OCI-LY7 (cell line): ENCODE measurements at regions of chr4 and their contacts with region 1.

Region 1: GRCh38 chr4:82968972-82969371 is 41.7 kb downstream of the LIN54 start:
- DNase-seq: peak; percentile 70
- H3K4me3 ChIP-seq: peak overlapping the region; percentile 51
- H3K27ac ChIP-seq: peak overlapping the region; percentile 98
- H3K4me1 ChIP-seq: peaks cover 72% of the 10 kb centered on the region
- CTCF ChIP-seq: no peak

Region 2: GRCh38 chr4:82851885-82852750 is 116.9 kb before region 1 on chr4:
- CTCF ChIA-PET with region 1: no interaction called
- POLR2A ChIA-PET with region 1: interaction called, 12 read pairs
- intact Hi-C with region 1: no loop called
- DNase-seq: peak; percentile 54
- H3K4me3 ChIP-seq: no peak overlapping the region
- H3K27ac ChIP-seq: no peak overlapping the region
- H3K4me1 ChIP-seq: no peaks in the 10 kb centered on the region
- CTCF ChIP-seq: peak; percentile 73

Region 3: DNA sequence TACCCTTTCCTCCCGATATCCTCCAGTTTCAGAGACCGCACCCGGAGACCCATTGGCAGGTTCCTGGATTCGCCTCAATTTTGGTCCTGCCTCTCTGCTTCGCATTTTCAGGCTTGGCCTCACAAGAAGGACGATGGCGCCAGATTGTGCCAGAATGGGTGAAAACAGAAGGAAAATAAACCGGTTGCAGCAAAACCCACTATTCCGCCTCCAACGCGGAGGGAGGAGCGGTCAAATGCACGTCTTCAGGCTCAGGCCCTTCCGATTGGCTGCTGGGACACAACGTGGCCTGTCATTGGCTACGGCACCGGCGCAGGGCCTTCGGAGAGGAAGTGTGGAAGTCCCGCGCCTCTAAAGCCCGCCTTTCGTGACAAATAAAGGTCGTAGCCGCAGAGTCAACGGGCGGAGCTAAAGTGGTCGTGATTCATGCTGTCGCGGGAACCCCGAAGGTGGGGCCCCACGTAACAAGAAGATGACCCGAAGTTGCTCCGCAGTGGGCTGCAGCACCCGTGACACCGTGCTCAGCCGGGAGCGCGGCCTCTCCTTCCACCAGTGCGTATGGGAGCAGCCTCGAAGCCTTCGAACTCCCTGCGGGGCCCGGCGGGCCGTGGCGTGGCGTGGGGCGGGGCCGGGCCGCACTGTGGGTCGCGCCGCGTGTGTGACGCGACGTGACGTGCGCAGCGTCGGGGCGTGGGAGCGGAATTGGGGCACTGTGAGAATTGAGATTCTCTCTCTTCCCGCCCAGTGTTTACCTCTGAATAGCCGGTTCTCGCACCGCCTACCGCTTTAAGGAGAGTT is 68.4 kb before region 1 on chr4 and contains the start of gene THAP9:
- CTCF ChIA-PET with region 1: no interaction called
- POLR2A ChIA-PET with region 1: interaction called, 12 read pairs
- intact Hi-C with region 1: loop called (anchors 2 kb)
- DNase-seq: peak; percentile 99
- H3K4me3 ChIP-seq: peak within 1 kb of the TSS; percentile 85
- H3K27ac ChIP-seq: peak within 1 kb of the TSS; percentile 87
- H3K4me1 ChIP-seq: peaks cover 42% of the 10 kb centered on the region
- CTCF ChIP-seq: no peak
- total RNA-seq, gene THAP9: 13.2 and 16.4 TPM in 2 replicates

Region 4: DNA sequence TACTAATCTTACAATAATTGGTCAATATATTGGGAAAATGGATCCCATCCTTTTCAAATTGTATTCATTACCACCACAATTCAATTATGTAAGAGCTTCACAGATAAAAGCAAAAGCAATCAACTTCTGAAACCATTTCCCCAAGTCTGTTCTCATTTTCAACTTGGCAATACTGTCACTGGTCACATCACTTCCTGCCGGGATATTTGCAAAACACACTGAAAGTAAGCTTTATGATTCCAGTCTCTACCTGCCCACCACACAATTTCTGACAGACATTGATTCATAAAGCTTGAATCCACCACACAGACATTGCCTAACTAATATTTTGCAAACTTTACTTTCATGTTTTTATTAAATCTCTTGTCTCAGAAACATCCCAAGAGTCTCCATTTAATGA is 11.9 kb before region 1 on chr4:
- CTCF ChIA-PET with region 1: no interaction called
- POLR2A ChIA-PET with region 1: interaction called, 11 read pairs
- intact Hi-C with region 1: no loop called
- DNase-seq: no peak
- H3K4me3 ChIP-seq: no peak overlapping the region
- H3K27ac ChIP-seq: peak overlapping the region; percentile 17
- H3K4me1 ChIP-seq: peaks cover 21% of the 10 kb centered on the region
- CTCF ChIP-seq: no peak

Region 5: DNA sequence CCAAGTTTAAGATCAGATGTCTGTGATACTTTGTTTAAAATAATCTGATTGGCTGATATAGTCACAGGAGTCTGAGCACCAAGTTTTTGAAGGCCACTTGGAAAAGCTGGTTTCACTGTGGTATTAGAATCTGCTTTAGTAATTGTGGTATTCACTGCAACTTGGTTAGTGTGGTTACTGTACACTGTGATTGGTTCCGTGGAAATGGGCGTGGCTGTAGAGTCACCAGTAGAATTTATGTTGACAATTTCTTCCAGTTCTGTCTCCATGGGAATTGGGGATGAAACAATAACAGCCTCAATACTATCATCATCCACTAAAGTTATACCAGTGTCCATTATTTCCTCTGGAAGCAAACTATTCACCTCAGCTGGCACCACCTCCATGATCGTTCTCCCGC is 15.5 kb after region 1 on chr4:
- CTCF ChIA-PET with region 1: no interaction called
- POLR2A ChIA-PET with region 1: interaction called, 45 read pairs
- intact Hi-C with region 1: no loop called
- DNase-seq: no peak
- H3K4me3 ChIP-seq: no peak overlapping the region
- H3K27ac ChIP-seq: no peak overlapping the region
- H3K4me1 ChIP-seq: peaks cover 3% of the 10 kb centered on the region
- CTCF ChIP-seq: no peak